ENCODE measurements at regions of chr2 and their contacts with region 1.

Region 1: GRCh38 chr2:218852911-218853667 is 6.5 kb upstream of the WNT6 start:
- DNase-seq: peak; percentile 80
- H3K4me3 Mint-ChIP-seq: no peak overlapping the region
- H3K27ac Mint-ChIP-seq: no peak overlapping the region
- H3K4me1 Mint-ChIP-seq: no peaks in the 10 kb centered on the region
- H3K27me3 Mint-ChIP-seq: peaks cover 48% of the 10 kb centered on the region

Region 2: DNA sequence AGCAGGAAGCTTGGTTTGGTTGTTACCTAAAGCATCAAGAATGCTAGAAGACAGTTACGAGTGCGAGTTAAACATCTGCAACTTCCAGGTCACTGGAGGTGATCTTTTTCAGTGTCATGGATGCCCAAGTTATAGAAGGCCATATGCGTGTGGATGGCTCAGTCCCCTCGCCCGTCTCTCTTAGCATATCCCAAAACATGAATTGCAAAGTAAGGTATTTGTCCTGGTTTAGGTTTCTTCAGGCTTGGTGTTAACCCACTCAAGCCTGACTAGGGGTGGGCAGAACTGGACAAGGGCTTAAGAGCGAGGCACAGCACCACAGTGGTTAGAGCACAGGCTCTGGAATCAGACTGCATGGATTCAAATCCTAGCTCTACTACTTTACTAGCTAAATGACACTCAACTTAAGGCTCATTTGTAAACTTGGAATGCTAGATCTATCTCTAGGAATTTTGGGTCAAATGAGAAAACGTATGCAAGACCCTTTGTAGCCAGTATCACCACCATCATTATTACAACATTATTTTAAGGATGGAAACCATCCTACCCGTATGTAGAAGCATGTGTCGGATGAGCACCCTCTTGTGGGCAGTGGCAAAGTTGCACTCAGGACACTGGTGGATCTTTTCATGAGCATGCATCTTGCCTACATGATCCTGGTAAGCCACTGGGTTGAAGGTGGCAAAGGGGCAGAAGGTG is 204.9 kb before region 1 on chr2:
- CTCF ChIA-PET with region 1: interaction called, 21 read pairs
- POLR2A ChIA-PET with region 1: no interaction called
- intact Hi-C with region 1: no loop called
- DNase-seq: peak; percentile 66
- H3K4me3 Mint-ChIP-seq: no peak overlapping the region
- H3K27ac Mint-ChIP-seq: no peak overlapping the region
- H3K4me1 Mint-ChIP-seq: peaks cover 9% of the 10 kb centered on the region
- H3K27me3 Mint-ChIP-seq: no peaks in the 10 kb centered on the region

Region 3: GRCh38 chr2:218671654-218672566 is 181.2 kb before region 1 on chr2 and contains the starts of genes RNF25 and STK36:
- CTCF ChIA-PET with region 1: interaction called, 38 read pairs
- POLR2A ChIA-PET with region 1: no interaction called
- intact Hi-C with region 1: no loop called
- DNase-seq: peak; percentile 90
- H3K4me3 Mint-ChIP-seq: peak within 1 kb of the TSS; percentile 96
- H3K27ac Mint-ChIP-seq: peak within 1 kb of the TSS; percentile 89
- H3K4me1 Mint-ChIP-seq: peaks cover 22% of the 10 kb centered on the region
- H3K27me3 Mint-ChIP-seq: no peaks in the 10 kb centered on the region
- total RNA-seq, gene RNF25: 15.2 to 15.6 TPM
- total RNA-seq, gene STK36: 15.9 to 19.0 TPM

Region 4: GRCh38 chr2:218717262-218717661 is 135.8 kb before region 1 on chr2:
- CTCF ChIA-PET with region 1: interaction called, 23 read pairs
- POLR2A ChIA-PET with region 1: no interaction called
- intact Hi-C with region 1: no loop called
- DNase-seq: no peak
- H3K4me3 Mint-ChIP-seq: no peak overlapping the region
- H3K27ac Mint-ChIP-seq: no peak overlapping the region
- H3K4me1 Mint-ChIP-seq: peaks cover 16% of the 10 kb centered on the region
- H3K27me3 Mint-ChIP-seq: no peaks in the 10 kb centered on the region

Region 5: GRCh38 chr2:218733171-218734021 is 119.7 kb before region 1 on chr2:
- CTCF ChIA-PET with region 1: interaction called, 45 read pairs
- POLR2A ChIA-PET with region 1: no interaction called
- intact Hi-C with region 1: no loop called
- DNase-seq: peak; percentile 63
- H3K4me3 Mint-ChIP-seq: no peak overlapping the region
- H3K27ac Mint-ChIP-seq: peak overlapping the region; percentile 19
- H3K4me1 Mint-ChIP-seq: peaks cover 28% of the 10 kb centered on the region
- H3K27me3 Mint-ChIP-seq: no peaks in the 10 kb centered on the region

Region 6: DNA sequence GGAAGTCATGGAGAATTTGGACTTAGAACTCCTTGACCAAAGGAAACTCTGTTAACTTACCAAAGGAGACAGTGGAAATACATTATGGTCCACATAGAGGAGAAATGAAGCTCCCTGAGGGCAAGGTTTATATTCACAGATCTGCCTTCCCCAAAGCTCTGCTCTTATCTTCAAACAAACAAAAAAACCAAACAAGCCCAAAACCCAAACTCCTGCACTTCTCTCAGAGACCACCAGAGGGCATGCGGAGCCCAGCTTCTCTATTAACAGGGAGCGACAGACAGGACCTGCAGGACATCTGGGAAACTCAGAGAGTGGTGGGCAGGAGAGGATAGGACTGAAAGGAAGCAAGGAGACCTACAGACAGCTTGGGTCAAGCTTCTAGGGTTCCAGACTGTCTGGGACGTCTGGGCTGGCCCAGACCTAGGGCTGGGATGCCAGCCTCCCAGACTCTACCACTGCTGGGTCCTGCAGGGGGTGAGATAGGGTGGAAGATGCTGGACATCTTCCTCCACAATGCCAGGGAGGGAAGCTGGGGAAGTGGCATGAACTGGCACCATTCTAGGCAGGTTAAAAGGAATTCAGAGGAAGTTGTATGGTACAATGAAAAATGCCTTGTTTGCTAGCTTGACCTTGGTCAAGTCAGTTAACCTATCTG is 23.6 kb after region 1 on chr2:
- CTCF ChIA-PET with region 1: interaction called, 21 read pairs
- POLR2A ChIA-PET with region 1: interaction called, 4 read pairs
- intact Hi-C with region 1: no loop called
- DNase-seq: peak; percentile 82
- H3K4me3 Mint-ChIP-seq: no peak overlapping the region
- H3K27ac Mint-ChIP-seq: peak overlapping the region; percentile 3
- H3K4me1 Mint-ChIP-seq: peaks cover 38% of the 10 kb centered on the region
- H3K27me3 Mint-ChIP-seq: peaks cover 32% of the 10 kb centered on the region

Region 7: GRCh38 chr2:218995972-218996711 is 143.1 kb after region 1 on chr2:
- CTCF ChIA-PET with region 1: interaction called, 12 read pairs
- POLR2A ChIA-PET with region 1: no interaction called
- intact Hi-C with region 1: no loop called
- DNase-seq: peak; percentile 86
- H3K4me3 Mint-ChIP-seq: no peak overlapping the region
- H3K27ac Mint-ChIP-seq: no peak overlapping the region
- H3K4me1 Mint-ChIP-seq: peaks cover 2% of the 10 kb centered on the region
- H3K27me3 Mint-ChIP-seq: peaks cover 73% of the 10 kb centered on the region